Testis (tissue), 5 donors: ENCODE measurements at regions of chr5 and their contacts with region 1.

Region 1: GRCh38 chr5:168219515-168220410 is 71.7 kb upstream of the WWC1 start:
- DNase-seq: peak; percentile 80
- H3K4me3 ChIP-seq: no peak overlapping the region
- H3K27ac ChIP-seq: no peak overlapping the region
- H3K4me1 ChIP-seq: no peaks in the 10 kb centered on the region
- H3K27me3 ChIP-seq: no peaks in the 10 kb centered on the region
- CTCF ChIP-seq: peak; percentile 85 to 94 (median 88)
- POLR2A ChIP-seq: no peak

Region 2: GRCh38 chr5:167723254-167723871 is 496.4 kb before region 1 on chr5:
- intact Hi-C with region 1: loop called (anchors 10 kb)
- DNase-seq: peak; percentile 90
- H3K4me3 ChIP-seq: no peak overlapping the region
- H3K27ac ChIP-seq: no peak overlapping the region
- H3K4me1 ChIP-seq: no peaks in the 10 kb centered on the region
- H3K27me3 ChIP-seq: no peaks in the 10 kb centered on the region
- CTCF ChIP-seq: peak; percentile 84 to 92 (median 87)
- POLR2A ChIP-seq: no peak

Region 3: DNA sequence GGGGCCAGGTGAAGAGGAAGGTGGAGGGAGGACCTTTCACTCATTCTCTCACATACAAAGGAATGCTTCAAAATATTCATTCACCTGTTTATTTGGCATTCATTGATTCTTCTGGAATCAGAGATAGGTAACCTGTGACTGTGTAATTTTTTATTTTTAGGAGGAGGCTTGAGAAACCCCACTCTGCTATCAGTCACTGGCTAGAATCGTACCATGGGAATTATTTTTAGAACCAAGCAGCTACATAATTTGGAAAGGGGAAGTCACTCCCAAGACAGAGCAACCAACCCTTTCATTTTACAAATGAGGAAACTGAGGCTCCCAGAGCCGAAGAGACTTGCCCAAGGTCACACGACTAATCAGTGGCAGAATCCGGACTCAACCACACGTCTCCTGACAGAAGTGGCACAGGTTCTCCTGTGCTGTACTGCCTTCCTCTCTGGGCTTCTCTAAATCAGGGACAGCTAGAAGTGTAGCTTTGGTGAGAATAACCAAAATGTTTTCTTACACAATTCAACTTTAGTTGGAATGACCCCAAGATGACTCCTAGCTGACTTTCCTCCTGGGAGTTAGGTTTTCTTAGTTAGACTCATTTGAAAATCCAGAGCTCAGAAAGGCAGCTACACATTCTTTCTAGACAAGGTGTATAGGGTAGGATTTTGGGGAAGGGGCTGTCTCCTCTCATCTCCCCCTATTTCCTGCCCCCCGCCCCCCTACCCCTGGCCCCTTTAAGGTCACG is 623.7 kb after region 1 on chr5:
- intact Hi-C with region 1: no loop called
- DNase-seq: no peak
- H3K4me3 ChIP-seq: no peak overlapping the region
- H3K27ac ChIP-seq: no peak overlapping the region
- H3K4me1 ChIP-seq: no peaks in the 10 kb centered on the region
- H3K27me3 ChIP-seq: no peaks in the 10 kb centered on the region
- CTCF ChIP-seq: no peak
- POLR2A ChIP-seq: no peak